ENCODE measurements at regions of chr1 and their contacts with region 1.

Region 1: GRCh38 chr1:243325305-243325890 is 69.6 kb downstream of the SDCCAG8 start:
- DNase-seq: no peak
- ATAC-seq: no peak

Region 2: DNA sequence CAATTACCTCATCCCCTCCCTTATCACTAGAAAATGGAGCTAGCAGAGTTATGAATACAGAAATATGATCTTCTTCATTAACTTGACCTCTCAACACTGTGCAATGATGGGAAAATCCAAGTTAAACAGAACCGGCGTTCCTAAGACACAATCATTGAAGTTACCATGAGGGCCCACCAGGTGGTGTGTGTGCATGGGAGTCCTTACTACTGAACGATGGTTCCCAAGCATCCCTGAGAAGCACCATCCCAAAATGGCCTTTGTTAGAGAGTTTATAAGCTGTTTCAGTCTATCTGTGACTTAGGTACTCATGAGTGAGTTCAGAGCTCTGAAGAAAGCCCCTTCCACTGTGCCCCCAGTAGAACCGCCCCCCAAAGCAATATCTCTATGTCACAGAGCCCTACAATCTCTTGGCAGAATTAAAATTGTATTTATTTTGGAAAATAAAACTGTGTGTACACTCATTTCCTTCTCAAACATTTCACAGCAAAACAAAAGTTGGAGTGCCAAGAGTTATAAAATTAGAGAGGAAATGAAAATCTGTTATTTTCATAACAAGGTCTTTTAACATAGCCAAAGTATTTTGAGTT is 857.7 kb before region 1 on chr1:
- intact Hi-C with region 1: loop called (anchors 10 kb)
- DNase-seq: peak; percentile 47
- ATAC-seq: peak; percentile 63

Region 3: DNA sequence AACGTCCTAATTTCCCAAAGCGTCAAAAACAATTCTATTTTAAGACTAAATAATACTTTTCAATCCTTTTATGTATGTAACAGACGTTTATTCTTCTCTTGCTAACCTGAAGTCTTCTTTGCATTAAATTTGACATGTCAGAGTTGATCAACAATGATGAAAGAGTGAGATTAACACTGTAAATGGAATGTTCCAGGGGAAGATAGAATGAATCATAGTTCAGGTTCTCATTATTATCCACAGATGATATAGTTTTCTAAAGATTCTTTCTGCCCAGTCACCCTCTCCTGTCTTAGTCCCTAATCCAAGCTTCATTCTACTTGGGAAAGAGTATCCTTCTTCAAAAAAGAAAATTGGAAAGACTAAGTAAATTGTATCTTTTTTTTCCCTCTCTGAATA is 30.7 kb before region 1 on chr1:
- intact Hi-C with region 1: no loop called
- DNase-seq: no peak
- ATAC-seq: no peak

Measured in Right ventricle myocardium superior (tissue), 1 donor.